Activated naive CD8-positive, alpha-beta T cell treated with anti-CD3 and anti-CD28 coated beads, Interleukin-2, amount 10 ng/mL, durations not matched to agents 7 days and 5 days (primary cell): ENCODE measurements at regions of chr3 and their contacts with region 1.

Region 1: DNA sequence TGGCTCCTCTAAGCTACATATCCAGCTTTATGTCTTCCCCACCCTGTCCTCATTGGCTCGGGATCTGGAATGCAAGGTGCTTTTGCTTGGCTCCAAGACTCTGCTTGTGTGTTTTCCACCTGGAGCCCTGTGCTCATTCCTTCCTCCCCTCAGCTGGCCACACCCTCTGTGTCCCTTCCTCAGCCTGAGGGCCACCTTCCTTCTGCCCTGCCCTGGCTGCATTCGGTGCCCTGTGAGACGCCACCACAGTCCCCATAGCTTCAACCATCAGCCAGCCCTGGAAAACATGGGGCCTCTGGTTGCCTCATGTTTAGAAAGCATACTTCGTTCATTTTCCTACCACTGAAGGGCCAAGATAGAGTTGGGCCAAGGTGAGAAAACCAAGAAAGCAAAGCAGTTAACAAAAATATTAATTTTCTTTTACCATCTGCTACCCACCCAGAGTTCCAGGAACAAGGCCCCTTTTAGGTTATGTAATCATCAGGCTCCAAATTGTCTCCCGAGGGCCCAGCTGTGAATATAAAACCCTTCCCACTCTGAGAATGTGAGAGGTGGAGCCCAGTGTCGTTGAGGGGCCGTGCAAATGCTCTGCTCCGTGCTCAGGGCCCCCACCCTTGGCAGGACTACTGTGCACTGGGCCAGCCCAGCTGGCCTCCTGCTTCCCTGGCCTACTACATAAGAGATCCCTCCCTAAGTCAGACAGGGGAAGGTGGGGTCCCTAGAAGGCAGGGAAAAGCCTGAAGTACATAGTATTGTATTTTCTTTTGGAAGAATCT is 4.8 kb upstream of the CLEC3B start:
- DNase-seq: no peak
- ATAC-seq: no peak
- H3K4me3 Mint-ChIP-seq: peak overlapping the region; percentile 3
- H3K27ac Mint-ChIP-seq: peak overlapping the region; percentile 79
- H3K4me1 Mint-ChIP-seq: peaks cover 23% of the 10 kb centered on the region
- H3K27me3 Mint-ChIP-seq: peaks cover 4% of the 10 kb centered on the region

Region 2: DNA sequence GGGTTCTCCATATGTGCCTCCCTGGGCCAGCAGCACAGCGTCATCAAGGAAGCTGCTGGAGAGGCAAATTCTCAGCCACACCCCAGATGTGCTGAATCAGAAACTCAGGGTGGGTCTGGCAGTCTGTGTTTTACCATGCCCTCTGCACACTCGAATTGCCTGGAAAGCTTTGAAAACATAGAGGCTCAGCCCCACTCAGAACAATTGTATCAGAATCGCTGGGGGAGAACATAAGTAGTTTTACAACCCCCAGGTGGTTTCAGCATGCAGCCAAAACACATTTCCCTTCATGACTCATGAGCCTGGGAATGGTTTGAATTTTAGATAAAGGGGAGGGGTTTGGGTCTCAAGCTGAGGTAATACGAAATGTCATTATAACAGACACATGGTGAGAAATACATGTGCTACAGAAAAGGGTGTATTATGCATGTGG is 137.3 kb before region 1 on chr3:
- POLR2A ChIA-PET with region 1: no interaction called
- DNase-seq: no peak
- ATAC-seq: no peak
- H3K4me3 Mint-ChIP-seq: no peak overlapping the region
- H3K27ac Mint-ChIP-seq: no peak overlapping the region
- H3K4me1 Mint-ChIP-seq: no peaks in the 10 kb centered on the region
- H3K27me3 Mint-ChIP-seq: peaks cover 20% of the 10 kb centered on the region

Region 3: DNA sequence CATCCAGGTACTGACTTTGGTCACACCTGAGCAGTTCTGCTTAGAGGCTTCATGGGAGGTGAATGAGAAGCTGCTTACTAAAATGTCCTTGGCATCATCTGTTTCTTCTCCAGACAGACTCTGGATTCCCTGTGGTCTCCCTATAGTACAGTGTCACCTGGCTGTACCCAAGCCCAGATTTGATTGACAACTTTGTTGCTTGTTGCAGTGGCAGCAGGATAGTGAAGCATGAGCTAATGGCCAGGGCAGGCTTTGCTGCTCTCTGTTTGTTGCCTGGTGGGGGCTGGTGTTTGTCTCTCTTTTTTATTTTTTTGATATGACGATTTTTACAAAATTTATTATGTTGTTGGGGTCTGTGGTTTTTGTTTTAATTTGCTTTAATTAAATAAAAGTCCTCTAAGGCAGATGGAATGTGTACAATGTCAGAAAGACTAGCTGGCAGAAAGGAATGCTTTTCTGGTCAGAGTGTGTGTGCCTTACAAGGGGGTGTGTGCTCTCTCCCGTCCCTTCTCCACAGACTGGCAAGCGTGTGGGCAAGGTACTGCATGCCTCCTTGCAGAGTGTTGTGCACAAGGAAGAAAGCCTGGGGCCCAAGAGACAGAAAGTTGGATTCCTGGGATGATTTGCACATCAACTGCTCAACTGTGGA is 10.5 kb before region 1 on chr3:
- POLR2A ChIA-PET with region 1: interaction called, 14 read pairs
- DNase-seq: no peak
- ATAC-seq: no peak
- H3K4me3 Mint-ChIP-seq: no peak overlapping the region
- H3K27ac Mint-ChIP-seq: no peak overlapping the region
- H3K4me1 Mint-ChIP-seq: peaks cover 2% of the 10 kb centered on the region
- H3K27me3 Mint-ChIP-seq: no peaks in the 10 kb centered on the region